HepG2 (cell line): ENCODE measurements at regions of chr2 and their contacts with region 1.

Region 1: DNA sequence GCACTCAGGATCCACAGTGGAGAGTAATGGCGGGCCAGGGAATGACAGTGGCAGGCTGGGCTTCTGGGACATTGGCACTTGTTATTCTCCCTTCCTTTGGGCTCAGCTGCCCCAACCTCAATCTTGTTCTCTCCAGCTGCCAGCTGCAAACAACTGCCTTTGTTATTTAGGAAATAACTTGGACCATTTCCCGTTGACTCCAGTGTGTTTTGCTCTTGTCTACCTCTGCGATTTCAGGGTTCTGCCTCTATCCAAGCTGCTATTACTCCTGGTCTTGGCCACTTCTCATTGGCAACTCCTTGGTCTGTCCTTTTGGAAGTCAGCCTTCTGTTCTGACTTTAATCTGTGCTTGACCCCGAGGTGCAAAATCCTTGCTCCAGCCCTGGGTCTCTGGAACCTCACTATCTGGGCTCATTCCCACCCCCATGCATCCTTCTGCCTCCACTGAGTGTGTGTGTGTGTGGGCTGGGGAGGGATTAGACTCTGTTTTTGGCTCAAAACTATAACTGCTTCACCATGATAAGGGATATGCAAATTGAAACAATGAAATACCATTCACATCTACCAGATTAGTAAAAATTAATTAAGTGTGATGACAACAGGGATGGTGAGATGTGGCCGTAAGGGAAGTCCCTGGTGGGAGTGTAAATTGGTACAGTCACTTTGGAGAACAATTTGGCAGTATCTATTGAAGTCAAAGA is 134.1 kb upstream of the CXCR4 start:
- DNase-seq: no peak
- ATAC-seq: no peak
- H3K4me3 ChIP-seq: no peak overlapping the region
- H3K27ac ChIP-seq: no peak overlapping the region
- H3K4me1 ChIP-seq: 0 out of 2 replicates have a peak, but pooled peaks cover 9% of the 10 kb centered on the region
- H3K27me3 ChIP-seq: peaks cover 0 to 5% of the 10 kb centered on the region in 2 experiments; a peak in 1 of 5 replicates
- CTCF ChIP-seq: no peak
- EP300 ChIP-seq: no peak
- POLR2A ChIP-seq: no peak
- RAD21 ChIP-seq: no peak

Region 2: DNA sequence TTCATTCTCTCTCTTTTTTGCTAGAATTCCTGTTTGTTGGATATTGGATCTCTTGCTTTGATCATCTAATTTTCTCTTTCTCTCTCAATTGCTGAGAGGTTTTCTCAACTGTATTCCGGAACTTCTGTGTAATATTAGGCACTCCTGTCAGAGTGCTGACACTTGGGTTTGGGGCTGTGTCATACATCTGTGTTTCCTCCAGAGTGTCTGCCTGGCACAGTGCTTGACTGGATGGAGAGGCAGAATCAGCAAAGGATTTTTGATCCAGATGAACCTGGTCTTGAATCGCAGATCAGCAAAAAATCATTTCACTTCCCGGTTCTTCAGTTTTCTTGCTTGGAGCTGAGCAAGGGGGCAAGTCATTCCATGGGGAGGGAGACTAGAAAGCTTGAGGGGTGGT is 46.4 kb before region 1 on chr2:
- CTCF ChIA-PET with region 1: no interaction called
- POLR2A ChIA-PET with region 1: no interaction called
- in situ Hi-C with region 1: no loop called
- intact Hi-C with region 1: loop called (anchors 1 kb)
- DNase-seq: no peak
- ATAC-seq: no peak
- H3K4me3 ChIP-seq: no peak overlapping the region
- H3K27ac ChIP-seq: no peak overlapping the region
- H3K4me1 ChIP-seq: no peaks in the 10 kb centered on the region
- H3K27me3 ChIP-seq: peaks cover 0 to 6% of the 10 kb centered on the region in 2 experiments; a peak in 1 of 5 replicates
- CTCF ChIP-seq: no peak
- EP300 ChIP-seq: no peak
- POLR2A ChIP-seq: no peak
- RAD21 ChIP-seq: no peak

Region 3: DNA sequence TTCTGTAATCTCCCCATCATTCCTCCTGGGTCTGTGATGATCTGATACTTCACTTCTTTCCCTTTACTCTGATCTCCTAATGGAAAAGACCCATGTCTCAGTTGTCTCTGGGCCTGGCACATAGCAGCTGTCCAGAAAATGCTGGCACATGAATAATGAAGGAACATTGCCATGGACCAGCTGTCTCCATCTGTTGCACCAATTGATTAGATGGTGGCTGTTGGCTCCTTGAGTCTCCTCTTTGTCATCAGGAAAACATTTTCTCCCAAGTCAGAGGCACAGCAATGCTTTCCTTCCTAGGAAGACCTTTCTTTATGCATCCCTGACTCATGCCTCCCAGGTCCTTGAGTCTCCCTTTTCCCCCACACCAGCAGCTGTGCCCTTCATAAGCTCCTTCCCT is 152.1 kb after region 1 on chr2:
- CTCF ChIA-PET with region 1: no interaction called
- POLR2A ChIA-PET with region 1: no interaction called
- in situ Hi-C with region 1: no loop called
- intact Hi-C with region 1: no loop called
- DNase-seq: no peak
- ATAC-seq: no peak
- H3K4me3 ChIP-seq: no peak overlapping the region
- H3K27ac ChIP-seq: no peak overlapping the region
- H3K4me1 ChIP-seq: no peaks in the 10 kb centered on the region
- H3K27me3 ChIP-seq: peaks cover 0 to 32% of the 10 kb centered on the region in 2 experiments; a peak in 3 of 5 replicates
- CTCF ChIP-seq: no peak
- EP300 ChIP-seq: no peak
- POLR2A ChIP-seq: no peak
- RAD21 ChIP-seq: no peak